K562 (cell line): ENCODE measurements at regions of chr1 and their contacts with region 1.

Region 1: GRCh38 chr1:52056163-52056936 is at the start of gene BTF3L4:
- DNase-seq: peak; percentile 93 to 97 (median 95)
- ATAC-seq: peak; percentile 93
- H3K4me3 ChIP-seq: peak within 1 kb of the TSS; percentile 83
- H3K27ac ChIP-seq: peak within 1 kb of the TSS; percentile 94
- H3K4me1 ChIP-seq: peaks cover 5 to 16% of the 10 kb centered on the region in 2 experiments
- H3K27me3 ChIP-seq: no peaks in the 10 kb centered on the region; a peak in 1 of 5 replicates
- CTCF ChIP-seq: peak in 1 of 3 experiments; percentile 20; a peak in 1 of 6 replicates
- EP300 ChIP-seq: no peak
- POLR2A ChIP-seq: peak; percentile 94
- RAD21 ChIP-seq: no peak
- polyA plus RNA-seq, gene BTF3L4: 90.9 to 106 TPM

Region 2: GRCh38 chr1:52033190-52034049 is 22.9 kb before region 1 on chr1 and contains the start of gene KTI12:
- CTCF ChIA-PET with region 1: no interaction called
- POLR2A ChIA-PET with region 1: interaction called, 5 read pairs
- in situ Hi-C with region 1: no loop called
- intact Hi-C with region 1: loop called (anchors 1 kb)
- DNase-seq: peak; percentile 85 to 97 (median 88)
- ATAC-seq: peak; percentile 93
- H3K4me3 ChIP-seq: peak within 1 kb of the TSS; percentile 66
- H3K27ac ChIP-seq: peak within 1 kb of the TSS; percentile 88
- H3K4me1 ChIP-seq: peaks cover 12 to 17% of the 10 kb centered on the region in 2 experiments; a peak in 4 of 5 replicates
- H3K27me3 ChIP-seq: no peaks in the 10 kb centered on the region
- CTCF ChIP-seq: 0 out of 6 replicates have a peak, but pooled peaks of 1 of the 3 experiments have one; percentile 3
- EP300 ChIP-seq: peak; percentile 43
- POLR2A ChIP-seq: peak; percentile 96
- RAD21 ChIP-seq: 0 out of 4 replicates have a peak, but pooled peaks of 1 of the 2 experiments have one; percentile 4
- polyA plus RNA-seq, gene KTI12: 3.1 to 4.8 TPM

Region 3: DNA sequence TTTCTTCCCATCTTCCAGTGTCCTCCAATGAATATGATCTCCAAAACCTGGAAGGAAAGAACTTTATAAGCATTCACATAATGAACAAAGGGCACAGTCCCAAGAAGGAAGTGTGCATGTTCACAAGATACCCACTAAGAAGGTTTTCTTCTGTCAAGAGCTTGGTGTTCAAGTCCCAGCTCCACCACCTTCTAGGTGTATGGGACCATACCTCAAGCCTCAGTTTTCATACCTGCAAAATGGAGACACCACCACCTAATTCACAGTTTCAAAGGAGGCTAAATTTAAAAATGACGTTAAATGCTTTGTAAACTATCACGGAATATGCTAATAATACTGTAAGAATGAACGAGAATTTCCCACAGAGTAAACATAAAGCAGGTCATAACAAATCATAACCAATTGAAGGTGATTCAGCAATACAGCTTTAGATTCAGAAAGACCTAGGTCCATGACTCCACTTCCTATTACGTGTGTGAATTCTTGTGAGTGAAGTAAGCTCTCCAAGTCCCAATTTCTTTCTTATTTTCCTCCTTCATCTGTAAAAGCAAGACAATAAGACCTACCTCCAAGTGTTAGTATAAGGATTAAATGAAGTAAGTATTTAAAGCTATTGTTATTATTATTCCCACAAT is 14.7 kb before region 1 on chr1:
- CTCF ChIA-PET with region 1: no interaction called
- POLR2A ChIA-PET with region 1: interaction called, 32 read pairs
- in situ Hi-C with region 1: no loop called
- intact Hi-C with region 1: no loop called
- DNase-seq: no peak
- ATAC-seq: no peak
- H3K4me3 ChIP-seq: no peak overlapping the region
- H3K27ac ChIP-seq: no peak overlapping the region
- H3K4me1 ChIP-seq: peaks cover 7 to 12% of the 10 kb centered on the region in 2 experiments; a peak in 4 of 5 replicates
- H3K27me3 ChIP-seq: no peaks in the 10 kb centered on the region
- CTCF ChIP-seq: no peak
- EP300 ChIP-seq: no peak
- POLR2A ChIP-seq: no peak
- RAD21 ChIP-seq: no peak

Region 4: GRCh38 chr1:52072291-52072690 is 15.9 kb after region 1 on chr1:
- CTCF ChIA-PET with region 1: no interaction called
- POLR2A ChIA-PET with region 1: interaction called, 12 read pairs
- in situ Hi-C with region 1: no loop called
- intact Hi-C with region 1: no loop called
- DNase-seq: no peak
- ATAC-seq: no peak
- H3K4me3 ChIP-seq: no peak overlapping the region
- H3K27ac ChIP-seq: no peak overlapping the region
- H3K4me1 ChIP-seq: peaks cover 2 to 15% of the 10 kb centered on the region in 2 experiments; a peak in 4 of 5 replicates
- H3K27me3 ChIP-seq: no peaks in the 10 kb centered on the region
- CTCF ChIP-seq: no peak
- EP300 ChIP-seq: no peak
- POLR2A ChIP-seq: no peak
- RAD21 ChIP-seq: no peak

Region 5: GRCh38 chr1:52268372-52268771 is 212.0 kb after region 1 on chr1:
- CTCF ChIA-PET with region 1: no interaction called
- POLR2A ChIA-PET with region 1: no interaction called
- in situ Hi-C with region 1: no loop called
- intact Hi-C with region 1: no loop called
- DNase-seq: no peak
- ATAC-seq: no peak
- H3K4me3 ChIP-seq: no peak overlapping the region
- H3K27ac ChIP-seq: no peak overlapping the region
- H3K4me1 ChIP-seq: no peaks in the 10 kb centered on the region
- H3K27me3 ChIP-seq: no peaks in the 10 kb centered on the region
- CTCF ChIP-seq: no peak
- EP300 ChIP-seq: no peak
- POLR2A ChIP-seq: no peak
- RAD21 ChIP-seq: no peak

Region 6: GRCh38 chr1:52552505-52553361 is 496.4 kb after region 1 on chr1 and contains the start of gene TUT4:
- CTCF ChIA-PET with region 1: no interaction called
- POLR2A ChIA-PET with region 1: no interaction called
- in situ Hi-C with region 1: no loop called
- intact Hi-C with region 1: loop called (anchors 5 kb)
- DNase-seq: peak; percentile 78 to 92 (median 80)
- ATAC-seq: peak; percentile 85
- H3K4me3 ChIP-seq: peak within 1 kb of the TSS; percentile 77
- H3K27ac ChIP-seq: peak within 1 kb of the TSS; percentile 87
- H3K4me1 ChIP-seq: peaks cover 9 to 19% of the 10 kb centered on the region in 2 experiments; a peak in 3 of 5 replicates
- H3K27me3 ChIP-seq: no peaks in the 10 kb centered on the region
- CTCF ChIP-seq: peak in 1 of 3 experiments; percentile 38; a peak in 3 of 6 replicates
- EP300 ChIP-seq: no peak; the same call in 1 of the 2 replicates
- POLR2A ChIP-seq: peak; percentile 87
- RAD21 ChIP-seq: peak; percentile 46 to 53
- polyA plus RNA-seq, gene TUT4: 15.8 to 21.3 TPM